Ascending aorta (tissue), 2 donors: ENCODE measurements at regions of chr11 and their contacts with region 1.

Region 1: GRCh38 chr11:97751405-97751804 is 1269.3 kb upstream of the CNTN5 start:
- DNase-seq: no peak
- H3K4me3 ChIP-seq: no peak overlapping the region
- H3K27ac ChIP-seq: no peak overlapping the region
- H3K4me1 ChIP-seq: no peaks in the 10 kb centered on the region
- H3K27me3 ChIP-seq: no peaks in the 10 kb centered on the region
- CTCF ChIP-seq: no peak

Region 2: DNA sequence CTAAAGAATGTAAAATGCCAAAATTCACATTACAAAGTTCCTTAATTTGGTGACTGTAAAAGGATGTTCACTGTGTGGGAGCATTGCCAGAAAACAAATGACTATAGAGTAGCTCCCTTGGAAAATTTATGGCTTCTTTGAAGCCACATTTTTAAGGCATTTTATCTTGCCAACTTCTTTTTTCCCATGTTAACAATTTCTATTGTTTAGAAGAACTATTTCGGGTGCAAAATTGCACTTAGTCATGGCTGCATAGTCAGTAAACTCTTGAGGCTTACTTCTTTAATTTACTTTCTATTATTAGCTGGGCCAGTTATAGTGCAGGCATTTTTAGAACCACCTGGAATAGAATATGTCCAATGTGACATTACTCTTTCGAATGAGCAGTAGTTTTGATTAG is 846.3 kb before region 1 on chr11:
- intact Hi-C with region 1: no loop called
- DNase-seq: no peak
- H3K4me3 ChIP-seq: no peak overlapping the region
- H3K27ac ChIP-seq: no peak overlapping the region
- H3K4me1 ChIP-seq: no peaks in the 10 kb centered on the region
- H3K27me3 ChIP-seq: no peaks in the 10 kb centered on the region
- CTCF ChIP-seq: no peak

Region 3: GRCh38 chr11:97087419-97087818 is 664.0 kb before region 1 on chr11:
- intact Hi-C with region 1: loop called (anchors 10 kb)
- DNase-seq: no peak
- H3K4me3 ChIP-seq: no peak overlapping the region
- H3K27ac ChIP-seq: no peak overlapping the region
- H3K4me1 ChIP-seq: no peaks in the 10 kb centered on the region
- H3K27me3 ChIP-seq: no peaks in the 10 kb centered on the region
- CTCF ChIP-seq: no peak

Region 4: GRCh38 chr11:98007072-98007471 is 255.7 kb after region 1 on chr11:
- intact Hi-C with region 1: no loop called
- DNase-seq: no peak
- H3K4me3 ChIP-seq: no peak overlapping the region
- H3K27ac ChIP-seq: no peak overlapping the region
- H3K4me1 ChIP-seq: no peaks in the 10 kb centered on the region
- H3K27me3 ChIP-seq: no peaks in the 10 kb centered on the region
- CTCF ChIP-seq: no peak